ENCODE measurements at regions of chr11 and their contacts with region 1.

Region 1: GRCh38 chr11:100980156-100980555 is 149.5 kb downstream of the PGR start:
- DNase-seq: no peak
- ATAC-seq: no peak
- H3K4me3 ChIP-seq: no peak overlapping the region
- H3K27ac ChIP-seq: no peak overlapping the region
- H3K4me1 ChIP-seq: no peaks in the 10 kb centered on the region
- H3K27me3 ChIP-seq: no peaks in the 10 kb centered on the region

Region 2: DNA sequence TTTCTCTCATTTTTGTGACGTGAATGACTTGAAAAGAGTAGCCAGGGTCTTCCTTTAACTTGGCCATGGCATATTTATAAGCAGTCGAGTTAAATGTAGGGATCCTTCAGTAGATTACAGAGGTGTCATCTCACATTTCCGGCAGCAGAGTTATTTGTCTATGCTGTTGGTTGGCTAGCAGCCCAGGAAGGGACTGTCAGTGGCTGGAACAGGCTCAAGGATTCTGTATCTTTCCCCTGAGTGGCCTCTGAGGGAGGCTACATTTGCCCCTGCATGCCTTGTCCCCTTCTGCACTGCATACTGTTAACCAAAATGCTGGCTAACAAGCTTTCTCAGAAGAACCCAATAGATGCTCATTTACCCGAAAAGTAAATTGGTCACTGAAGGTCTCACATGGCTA is 38.1 kb before region 1 on chr11:
- intact Hi-C with region 1: no loop called
- DNase-seq: no peak
- ATAC-seq: no peak
- H3K4me3 ChIP-seq: no peak overlapping the region
- H3K27ac ChIP-seq: no peak overlapping the region
- H3K4me1 ChIP-seq: no peaks in the 10 kb centered on the region
- H3K27me3 ChIP-seq: no peaks in the 10 kb centered on the region

Region 3: DNA sequence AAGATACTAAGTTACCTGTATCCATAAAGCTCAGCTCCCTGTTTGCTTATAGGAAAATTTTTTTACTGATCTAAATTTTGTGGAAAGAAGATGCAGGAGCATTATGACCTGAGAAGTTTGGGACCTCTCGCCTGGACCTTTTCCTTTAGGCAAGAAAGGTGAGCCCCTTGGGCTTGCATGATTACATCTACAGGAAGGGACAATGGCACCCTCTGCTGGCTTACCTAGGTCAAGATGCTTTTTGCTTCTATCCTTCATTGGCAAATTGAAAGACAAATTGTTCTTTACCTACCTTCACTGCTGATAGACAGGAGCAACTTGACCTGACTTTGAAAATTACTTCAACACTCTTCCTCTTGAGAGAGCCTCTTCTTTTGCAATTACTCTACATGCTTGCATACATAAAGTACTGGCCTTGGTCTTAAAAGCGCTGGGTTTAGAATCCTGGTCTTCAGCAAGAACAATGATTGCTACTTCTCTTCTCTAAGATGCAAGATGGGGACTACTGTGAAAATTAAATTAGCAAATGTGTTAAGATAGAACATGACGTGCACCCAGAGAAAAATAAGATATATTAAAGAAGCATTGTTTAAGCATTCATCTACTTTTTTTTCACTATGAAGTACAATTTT is 456.5 kb after region 1 on chr11:
- intact Hi-C with region 1: loop called (anchors 2 kb)
- DNase-seq: peak in 1 of 2 donors; percentile 50
- ATAC-seq: no peak
- H3K4me3 ChIP-seq: no peak overlapping the region
- H3K27ac ChIP-seq: no peak overlapping the region
- H3K4me1 ChIP-seq: peaks cover 0 to 1% of the 10 kb centered on the region in 2 donors
- H3K27me3 ChIP-seq: no peaks in the 10 kb centered on the region